Spleen (tissue), 13 donors: ENCODE measurements at regions of chr14 and their contacts with region 1.

Region 1: GRCh38 chr14:20400965-20401593 is 12.2 kb downstream of the TEP1 start:
- DNase-seq: no peak
- H3K4me3 ChIP-seq: no peak overlapping the region
- H3K27ac ChIP-seq: no peak overlapping the region
- H3K4me1 ChIP-seq: peaks cover 0 to 7% (median 0%) of the 10 kb centered on the region in 6 donors
- H3K27me3 ChIP-seq: no peaks in the 10 kb centered on the region
- CTCF ChIP-seq: no peak
- POLR2A ChIP-seq: no peak

Region 2: GRCh38 chr14:20343092-20343861 is 57.8 kb before region 1 on chr14 and contains the start of gene PARP2:
- intact Hi-C with region 1: loop called (anchors 10 kb)
- DNase-seq: peak; percentile 97
- H3K4me3 ChIP-seq: peak within 1 kb of the TSS; percentile 56 to 90 (median 63)
- H3K27ac ChIP-seq: peak within 1 kb of the TSS; percentile 64 to 96 (median 90)
- H3K4me1 ChIP-seq: peaks cover 0 to 29% (median 23%) of the 10 kb centered on the region in 6 donors
- H3K27me3 ChIP-seq: no peaks in the 10 kb centered on the region
- CTCF ChIP-seq: peak in 2 of 11 experiments; percentile 14 to 24
- POLR2A ChIP-seq: peak in 2 of 3 donors; percentile 68 to 88
- total RNA-seq, gene PARP2: 10.9 to 25.0 (median 17.2) TPM